ENCODE measurements at regions of chrX and their contacts with region 1.

Region 1: DNA sequence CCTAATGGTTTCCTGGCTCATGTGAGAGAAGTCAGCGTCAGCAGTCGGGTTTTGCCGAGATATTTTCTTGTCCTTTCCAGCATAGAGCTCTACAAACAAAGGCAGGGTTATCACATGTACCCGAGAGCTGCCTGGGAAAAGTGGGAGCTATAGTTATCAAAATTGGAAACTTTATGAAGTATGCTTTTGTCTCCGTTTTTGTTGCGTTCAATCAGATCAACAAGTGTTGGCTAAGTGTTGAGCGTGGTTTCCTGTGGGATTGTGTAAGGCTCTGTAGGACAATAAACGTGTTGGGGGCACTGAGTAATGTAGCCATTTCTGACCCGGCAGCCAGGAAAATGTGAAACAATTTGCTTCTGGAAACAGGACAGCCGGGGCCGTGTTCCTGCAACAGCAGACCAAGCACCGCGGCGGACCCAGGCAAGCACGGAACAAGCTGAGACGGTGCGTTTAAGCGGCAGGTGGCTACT is at the start of gene BMX:
- DNase-seq: peak; percentile 36

Region 2: GRCh38 chrX:15321447-15321846 is 179.1 kb before region 1 on chrX:
- in situ Hi-C with region 1: no loop called
- DNase-seq: peak; percentile 65

Region 3: GRCh38 chrX:15564981-15565579 is 64.5 kb after region 1 on chrX:
- in situ Hi-C with region 1: loop called (anchors 10 kb)
- DNase-seq: peak; percentile 74

Measured in KBM-7 (cell line).